ENCODE measurements at regions of chr3 and their contacts with region 1.

Region 1: DNA sequence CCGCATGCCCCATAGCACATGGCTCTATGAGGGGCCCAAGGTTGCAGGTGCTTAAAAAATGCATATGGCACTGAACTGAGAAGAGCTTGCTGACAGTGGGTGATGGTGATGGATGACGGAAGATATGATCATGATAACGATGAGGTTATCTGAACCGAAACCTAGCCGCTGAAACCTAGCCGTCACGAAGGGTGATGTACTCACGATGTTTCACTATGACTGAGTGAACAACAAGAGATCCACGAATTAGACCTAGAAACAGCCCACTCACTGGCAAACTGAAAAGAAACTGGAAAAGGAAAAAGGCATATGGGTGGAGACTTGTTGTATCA is 57.6 kb upstream of the BCL6 start:
- DNase-seq: peak; percentile 80
- H3K4me3 Mint-ChIP-seq: peak overlapping the region; percentile 54
- H3K27ac Mint-ChIP-seq: peak overlapping the region; percentile 87
- H3K4me1 Mint-ChIP-seq: peaks cover 90% of the 10 kb centered on the region
- H3K27me3 Mint-ChIP-seq: no peaks in the 10 kb centered on the region

Region 2: DNA sequence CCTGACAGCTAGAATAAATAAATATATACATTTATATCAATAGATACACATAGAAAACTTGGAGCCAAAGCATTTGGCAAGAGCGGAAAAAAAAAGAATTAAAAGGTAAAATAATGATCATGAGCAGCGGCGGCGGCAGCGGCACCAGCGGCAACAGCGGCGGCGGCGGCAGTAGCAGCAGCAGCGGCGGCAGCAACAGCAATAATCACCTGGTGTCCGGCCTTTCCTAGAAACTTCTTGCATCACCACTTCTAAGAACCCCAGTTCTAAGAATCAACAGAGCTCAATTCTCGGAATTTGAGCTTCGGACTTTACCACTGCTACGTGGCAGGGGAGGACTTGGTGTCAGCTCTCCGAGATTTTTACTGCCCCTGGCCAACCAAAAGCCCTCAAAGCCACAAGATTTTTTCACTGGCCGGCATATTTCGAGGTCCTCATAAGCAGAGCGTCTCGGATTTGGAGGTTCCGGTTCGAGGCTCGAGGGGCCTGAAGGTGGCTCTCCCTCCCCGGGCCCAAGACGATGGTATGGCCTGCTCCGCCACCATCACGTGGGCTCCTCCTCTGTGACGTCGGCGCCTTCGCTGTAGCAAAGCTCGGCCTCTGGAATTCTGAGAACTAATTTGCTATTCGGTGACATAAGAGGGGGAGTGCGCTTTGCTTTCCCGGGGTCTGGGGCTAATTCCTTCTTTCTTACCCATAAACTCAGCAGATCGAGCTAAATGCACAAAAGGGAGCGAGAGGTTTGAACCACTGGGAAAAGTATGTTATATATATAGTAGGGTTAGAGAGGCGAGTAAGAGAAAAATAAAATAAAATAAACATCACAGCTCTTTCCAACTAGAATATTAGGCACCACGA is 57.5 kb before region 1 on chr3 and contains the start of gene BCL6:
- intact Hi-C with region 1: loop called (anchors 1 kb)
- DNase-seq: peak; percentile 90
- H3K4me3 Mint-ChIP-seq: peak within 1 kb of the TSS; percentile 94
- H3K27ac Mint-ChIP-seq: peak within 1 kb of the TSS; percentile 99
- H3K4me1 Mint-ChIP-seq: peaks cover 55% of the 10 kb centered on the region
- H3K27me3 Mint-ChIP-seq: no peaks in the 10 kb centered on the region
- total RNA-seq, gene BCL6: 12.0 and 16.5 TPM in 2 replicates

Region 3: GRCh38 chr3:187833799-187834578 is 31.1 kb after region 1 on chr3:
- intact Hi-C with region 1: loop called (anchors 2 kb)
- DNase-seq: no peak
- H3K4me3 Mint-ChIP-seq: no peak overlapping the region
- H3K27ac Mint-ChIP-seq: no peak overlapping the region
- H3K4me1 Mint-ChIP-seq: peaks cover 32% of the 10 kb centered on the region
- H3K27me3 Mint-ChIP-seq: no peaks in the 10 kb centered on the region

Region 4: DNA sequence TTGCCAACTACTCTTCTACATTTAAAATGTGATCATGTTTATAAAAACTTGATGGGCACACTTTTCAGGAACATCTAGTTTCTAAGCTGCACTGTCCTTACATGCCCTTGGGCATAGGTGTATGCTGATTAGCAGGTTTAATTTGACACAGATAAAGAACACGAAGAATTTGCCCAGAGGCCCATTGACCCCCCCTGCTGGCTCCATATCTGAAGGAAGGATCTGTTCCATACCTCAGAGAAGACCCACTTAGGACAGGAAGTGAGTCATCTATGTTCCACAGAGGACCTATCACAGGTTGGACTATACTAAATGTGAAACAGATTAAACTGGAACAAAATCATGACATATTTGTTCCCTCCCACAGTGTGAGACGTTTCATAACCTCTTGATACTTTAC is 258.2 kb after region 1 on chr3:
- intact Hi-C with region 1: loop called (anchors 5 kb)
- DNase-seq: peak; percentile 59
- H3K4me3 Mint-ChIP-seq: peak overlapping the region; percentile 51
- H3K27ac Mint-ChIP-seq: peak overlapping the region; percentile 80
- H3K4me1 Mint-ChIP-seq: peaks cover 38% of the 10 kb centered on the region
- H3K27me3 Mint-ChIP-seq: no peaks in the 10 kb centered on the region

Region 5: GRCh38 chr3:188082031-188082430 is 279.1 kb after region 1 on chr3:
- intact Hi-C with region 1: no loop called
- DNase-seq: no peak
- H3K4me3 Mint-ChIP-seq: no peak overlapping the region
- H3K27ac Mint-ChIP-seq: no peak overlapping the region
- H3K4me1 Mint-ChIP-seq: peaks cover 5% of the 10 kb centered on the region
- H3K27me3 Mint-ChIP-seq: peaks cover 10% of the 10 kb centered on the region

Region 6: GRCh38 chr3:188286087-188286513 is 483.2 kb after region 1 on chr3:
- intact Hi-C with region 1: loop called (anchors 10 kb)
- DNase-seq: no peak
- H3K4me3 Mint-ChIP-seq: no peak overlapping the region
- H3K27ac Mint-ChIP-seq: peak overlapping the region; percentile 5
- H3K4me1 Mint-ChIP-seq: peaks cover 52% of the 10 kb centered on the region
- H3K27me3 Mint-ChIP-seq: no peaks in the 10 kb centered on the region

Region 7: DNA sequence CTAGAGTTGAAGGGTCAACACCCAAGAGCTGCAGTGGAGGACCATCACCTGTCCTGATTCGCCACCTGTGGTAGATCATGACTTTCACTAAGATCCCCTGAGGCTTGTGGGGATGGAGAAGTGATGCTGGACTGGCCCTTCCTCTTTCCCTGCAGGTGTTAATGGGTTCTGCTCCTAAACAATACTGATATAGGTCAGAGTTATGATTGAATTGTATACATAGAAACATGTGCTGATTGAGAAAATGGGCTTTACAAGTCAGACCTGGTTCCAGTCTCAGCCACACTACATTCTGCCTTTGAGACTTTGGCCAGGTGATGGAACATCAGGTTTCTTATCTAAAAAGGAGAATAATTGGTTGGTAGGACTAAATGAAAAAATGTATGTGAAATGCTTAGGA is 950.0 kb after region 1 on chr3:
- intact Hi-C with region 1: loop called (anchors 5 kb)
- DNase-seq: no peak
- H3K4me3 Mint-ChIP-seq: no peak overlapping the region
- H3K27ac Mint-ChIP-seq: no peak overlapping the region
- H3K4me1 Mint-ChIP-seq: peaks cover 19% of the 10 kb centered on the region
- H3K27me3 Mint-ChIP-seq: peaks cover 3% of the 10 kb centered on the region

Region 8: GRCh38 chr3:189041482-189042090 is 1238.7 kb after region 1 on chr3:
- intact Hi-C with region 1: loop called (anchors 10 kb)
- DNase-seq: peak; percentile 76
- H3K4me3 Mint-ChIP-seq: no peak overlapping the region
- H3K27ac Mint-ChIP-seq: peak overlapping the region; percentile 25
- H3K4me1 Mint-ChIP-seq: peaks cover 51% of the 10 kb centered on the region
- H3K27me3 Mint-ChIP-seq: no peaks in the 10 kb centered on the region